Naive thymus-derived CD4-positive, alpha-beta T cell (primary cell): ENCODE measurements at regions of chr14 and their contacts with region 1.

Region 1: GRCh38 chr14:73491256-73492042 is 716 bp downstream of the RIOX1 start:
- DNase-seq: peak in 8 of 9 donors; percentile 7 to 79 (median 60)
- ATAC-seq: peak; percentile 79
- H3K4me3 ChIP-seq: peak overlapping the region; percentile 91
- H3K4me3 Mint-ChIP-seq: peak overlapping the region; percentile 84 to 90 (median 88)
- H3K27ac ChIP-seq: peak overlapping the region; percentile 86
- H3K27ac Mint-ChIP-seq: peak overlapping the region in 8 of 9 donors; percentile 83 to 90 (median 88)
- H3K4me1 ChIP-seq: peaks cover 21 to 27% of the 10 kb centered on the region in 2 donors
- H3K4me1 Mint-ChIP-seq: peaks cover 8 to 59% (median 48%) of the 10 kb centered on the region in 7 donors
- H3K27me3 ChIP-seq: no peaks in the 10 kb centered on the region
- H3K27me3 Mint-ChIP-seq: peaks cover 0 to 17% (median 0%) of the 10 kb centered on the region in 5 donors

Region 2: GRCh38 chr14:73058224-73058921 is 433.1 kb before region 1 on chr14 and contains the start of gene RBM25:
- CTCF ChIA-PET with region 1: no interaction called
- POLR2A ChIA-PET with region 1: interaction called, 3 read pairs
- intact Hi-C with region 1: loop called (anchors 1 to 2 kb)
- DNase-seq: peak; percentile 85 to 98 (median 96)
- ATAC-seq: peak; percentile 99
- H3K4me3 ChIP-seq: peak within 1 kb of the TSS; percentile 77
- H3K4me3 Mint-ChIP-seq: no peak within 1 kb of the TSS
- H3K27ac ChIP-seq: peak within 1 kb of the TSS; percentile 92
- H3K27ac Mint-ChIP-seq: no peak within 1 kb of the TSS
- H3K4me1 ChIP-seq: peaks cover 30 to 36% of the 10 kb centered on the region in 2 donors
- H3K4me1 Mint-ChIP-seq: peaks cover 19 to 45% (median 30%) of the 10 kb centered on the region in 7 donors
- H3K27me3 ChIP-seq: no peaks in the 10 kb centered on the region
- H3K27me3 Mint-ChIP-seq: no peaks in the 10 kb centered on the region
- total RNA-seq, gene RBM25: 111 to 168 (median 146) TPM

Region 3: GRCh38 chr14:73568381-73568781 is 76.9 kb after region 1 on chr14:
- CTCF ChIA-PET with region 1: interaction called, 9 read pairs
- POLR2A ChIA-PET with region 1: interaction called, 35 read pairs
- intact Hi-C with region 1: loop called (anchors 1 kb)
- DNase-seq: no peak
- ATAC-seq: no peak
- H3K4me3 ChIP-seq: peak overlapping the region; percentile 73
- H3K4me3 Mint-ChIP-seq: peak overlapping the region; percentile 92 to 97 (median 94)
- H3K27ac ChIP-seq: peak overlapping the region; percentile 77
- H3K27ac Mint-ChIP-seq: peak overlapping the region; percentile 92 to 98 (median 95)
- H3K4me1 ChIP-seq: peaks cover 21% of the 10 kb centered on the region in 2 donors
- H3K4me1 Mint-ChIP-seq: peaks cover 29 to 52% (median 44%) of the 10 kb centered on the region in 7 donors
- H3K27me3 ChIP-seq: no peaks in the 10 kb centered on the region
- H3K27me3 Mint-ChIP-seq: no peaks in the 10 kb centered on the region

Region 4: GRCh38 chr14:73633116-73634010 is 141.9 kb after region 1 on chr14:
- CTCF ChIA-PET with region 1: no interaction called
- POLR2A ChIA-PET with region 1: interaction called, 3 read pairs
- intact Hi-C with region 1: loop called in 1 of 2 experiments (anchors 5 kb)
- DNase-seq: peak; percentile 17 to 65 (median 58)
- ATAC-seq: peak; percentile 89
- H3K4me3 ChIP-seq: peak overlapping the region; percentile 56
- H3K4me3 Mint-ChIP-seq: peak overlapping the region; percentile 59 to 86 (median 78)
- H3K27ac ChIP-seq: peak overlapping the region; percentile 42
- H3K27ac Mint-ChIP-seq: peak overlapping the region in 2 of 9 donors; percentile 46 to 69
- H3K4me1 ChIP-seq: no peaks in the 10 kb centered on the region
- H3K4me1 Mint-ChIP-seq: peaks cover 0 to 7% (median 5%) of the 10 kb centered on the region in 7 donors
- H3K27me3 ChIP-seq: no peaks in the 10 kb centered on the region
- H3K27me3 Mint-ChIP-seq: peaks cover 8 to 42% (median 11%) of the 10 kb centered on the region in 5 donors

Region 5: GRCh38 chr14:73851644-73852382 is 360.4 kb after region 1 on chr14 and contains the start of gene PTGR2:
- CTCF ChIA-PET with region 1: no interaction called
- POLR2A ChIA-PET with region 1: interaction called, 4 read pairs
- intact Hi-C with region 1: loop called in 1 of 2 experiments (anchors 5 kb)
- DNase-seq: peak; percentile 79 to 92 (median 86)
- ATAC-seq: peak; percentile 98
- H3K4me3 ChIP-seq: peak within 1 kb of the TSS; percentile 76
- H3K4me3 Mint-ChIP-seq: peak within 1 kb of the TSS; percentile 88 to 99 (median 96)
- H3K27ac ChIP-seq: peak within 1 kb of the TSS; percentile 85
- H3K27ac Mint-ChIP-seq: peak within 1 kb of the TSS; percentile 92 to 99 (median 97)
- H3K4me1 ChIP-seq: peaks cover 8 to 9% of the 10 kb centered on the region in 2 donors
- H3K4me1 Mint-ChIP-seq: peaks cover 3 to 28% (median 21%) of the 10 kb centered on the region in 7 donors
- H3K27me3 ChIP-seq: no peaks in the 10 kb centered on the region
- H3K27me3 Mint-ChIP-seq: no peaks in the 10 kb centered on the region
- total RNA-seq, gene PTGR2: 1.2 to 7.9 (median 1.8) TPM

Region 6: GRCh38 chr14:74493343-74494261 is 1002.2 kb after region 1 on chr14 and contains the start of gene ISCA2:
- CTCF ChIA-PET with region 1: no interaction called
- POLR2A ChIA-PET with region 1: interaction called, 3 read pairs
- intact Hi-C with region 1: loop called in 1 of 2 experiments (anchors 5 kb)
- DNase-seq: peak; percentile 95 to 99 (median 98)
- ATAC-seq: peak; percentile 94
- H3K4me3 ChIP-seq: peak within 1 kb of the TSS; percentile 96
- H3K4me3 Mint-ChIP-seq: peak within 1 kb of the TSS in 1 of 10 donors; percentile 89
- H3K27ac ChIP-seq: peak within 1 kb of the TSS; percentile 91
- H3K27ac Mint-ChIP-seq: peak within 1 kb of the TSS in 7 of 9 donors; percentile 87 to 96 (median 91)
- H3K4me1 ChIP-seq: peaks cover 12 to 18% of the 10 kb centered on the region in 2 donors
- H3K4me1 Mint-ChIP-seq: peaks cover 7 to 45% (median 37%) of the 10 kb centered on the region in 7 donors
- H3K27me3 ChIP-seq: no peaks in the 10 kb centered on the region
- H3K27me3 Mint-ChIP-seq: no peaks in the 10 kb centered on the region
- total RNA-seq, gene ISCA2: 13.9 to 39.5 (median 25.2) TPM